Left cardiac atrium (tissue), 4 donors: ENCODE measurements at regions of chr1 and their contacts with region 1.

Region 1: DNA sequence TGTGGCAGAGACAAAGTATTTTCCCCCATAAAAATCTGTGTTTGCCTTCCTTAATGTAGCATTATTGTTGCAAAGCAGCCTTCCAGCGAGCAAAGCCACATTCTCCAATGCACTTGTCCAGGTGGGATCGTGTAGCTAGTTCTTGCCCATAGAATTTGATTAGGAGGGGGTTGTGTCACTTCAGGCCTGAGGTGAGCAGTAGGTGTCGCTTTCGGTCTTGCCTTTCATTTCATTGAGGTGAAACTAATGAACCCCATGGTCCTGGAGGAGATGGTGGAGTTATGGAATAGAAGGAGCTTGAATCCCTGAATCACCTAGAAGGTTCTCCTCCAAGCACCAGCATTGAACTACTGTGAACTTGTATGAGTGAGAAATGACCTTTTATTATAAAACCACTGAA is 318.9 kb upstream of the PBX1 start:
- DNase-seq: no peak
- ATAC-seq: no peak

Region 2: DNA sequence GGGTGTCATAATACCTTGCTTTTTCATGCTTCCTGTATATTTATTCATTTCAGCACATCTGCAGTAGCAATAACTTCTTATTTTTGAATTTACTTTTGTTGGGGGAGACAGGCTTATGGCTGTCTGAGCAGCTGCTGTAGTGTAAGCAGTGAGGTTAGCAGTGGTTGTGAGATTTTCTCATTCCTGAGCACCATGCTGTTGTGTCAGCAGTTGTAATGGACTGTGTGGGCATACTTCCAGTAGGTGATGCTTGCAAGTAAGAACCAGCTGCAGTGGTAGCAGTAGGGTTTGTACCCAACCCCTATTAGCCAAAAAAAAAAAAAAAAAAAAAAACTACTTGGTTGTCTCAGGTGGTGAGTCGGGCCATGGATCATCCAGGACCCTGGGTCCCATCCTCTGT is 606.7 kb before region 1 on chr1:
- intact Hi-C with region 1: no loop called
- DNase-seq: no peak
- ATAC-seq: no peak

Region 3: GRCh38 chr1:165056914-165057313 is 816.8 kb after region 1 on chr1:
- intact Hi-C with region 1: loop called in 1 of 2 experiments (anchors 5 kb)
- DNase-seq: no peak
- ATAC-seq: no peak